Naive thymus-derived CD4-positive, alpha-beta T cell (primary cell): ENCODE measurements at regions of chr5 and their contacts with region 1.

Region 1: GRCh38 chr5:112976432-112977309 is at the start of gene DCP2:
- DNase-seq: peak; percentile 84 to 98 (median 97)
- ATAC-seq: peak; percentile 98
- H3K4me3 ChIP-seq: peak within 1 kb of the TSS; percentile 75
- H3K4me3 Mint-ChIP-seq: peak within 1 kb of the TSS; percentile 88 to 99 (median 98)
- H3K27ac ChIP-seq: peak within 1 kb of the TSS; percentile 83
- H3K27ac Mint-ChIP-seq: peak within 1 kb of the TSS; percentile 89 to 98 (median 95)
- H3K4me1 ChIP-seq: peaks cover 7 to 21% of the 10 kb centered on the region in 2 donors
- H3K4me1 Mint-ChIP-seq: peaks cover 35 to 54% (median 51%) of the 10 kb centered on the region in 7 donors
- H3K27me3 ChIP-seq: no peaks in the 10 kb centered on the region
- H3K27me3 Mint-ChIP-seq: no peaks in the 10 kb centered on the region
- total RNA-seq, gene DCP2: 60.2 to 101 (median 85.1) TPM

Region 2: GRCh38 chr5:111512375-111513130 is 1464.1 kb before region 1 on chr5 and contains the start of gene STARD4:
- CTCF ChIA-PET with region 1: no interaction called
- POLR2A ChIA-PET with region 1: interaction called, 5 read pairs
- intact Hi-C with region 1: loop called in 1 of 2 experiments (anchors 5 kb)
- DNase-seq: peak; percentile 79 to 94 (median 92)
- ATAC-seq: peak; percentile 97
- H3K4me3 ChIP-seq: peak within 1 kb of the TSS; percentile 81
- H3K4me3 Mint-ChIP-seq: peak within 1 kb of the TSS; percentile 91 to 100 (median 98)
- H3K27ac ChIP-seq: peak within 1 kb of the TSS; percentile 73
- H3K27ac Mint-ChIP-seq: peak within 1 kb of the TSS; percentile 90 to 98 (median 94)
- H3K4me1 ChIP-seq: peaks cover 0 to 14% of the 10 kb centered on the region in 2 donors
- H3K4me1 Mint-ChIP-seq: peaks cover 17 to 53% (median 28%) of the 10 kb centered on the region in 7 donors
- H3K27me3 ChIP-seq: no peaks in the 10 kb centered on the region
- H3K27me3 Mint-ChIP-seq: no peaks in the 10 kb centered on the region
- total RNA-seq, gene STARD4: 11.1 to 70.8 (median 17.1) TPM

Region 3: GRCh38 chr5:112637343-112637742 is 339.3 kb before region 1 on chr5:
- CTCF ChIA-PET with region 1: no interaction called
- POLR2A ChIA-PET with region 1: no interaction called
- intact Hi-C with region 1: no loop called
- DNase-seq: no peak
- ATAC-seq: no peak
- H3K4me3 ChIP-seq: no peak overlapping the region
- H3K4me3 Mint-ChIP-seq: no peak overlapping the region
- H3K27ac ChIP-seq: no peak overlapping the region
- H3K27ac Mint-ChIP-seq: no peak overlapping the region
- H3K4me1 ChIP-seq: no peaks in the 10 kb centered on the region
- H3K4me1 Mint-ChIP-seq: no peaks in the 10 kb centered on the region
- H3K27me3 ChIP-seq: no peaks in the 10 kb centered on the region
- H3K27me3 Mint-ChIP-seq: peaks cover 3 to 22% (median 15%) of the 10 kb centered on the region in 5 donors

Region 4: DNA sequence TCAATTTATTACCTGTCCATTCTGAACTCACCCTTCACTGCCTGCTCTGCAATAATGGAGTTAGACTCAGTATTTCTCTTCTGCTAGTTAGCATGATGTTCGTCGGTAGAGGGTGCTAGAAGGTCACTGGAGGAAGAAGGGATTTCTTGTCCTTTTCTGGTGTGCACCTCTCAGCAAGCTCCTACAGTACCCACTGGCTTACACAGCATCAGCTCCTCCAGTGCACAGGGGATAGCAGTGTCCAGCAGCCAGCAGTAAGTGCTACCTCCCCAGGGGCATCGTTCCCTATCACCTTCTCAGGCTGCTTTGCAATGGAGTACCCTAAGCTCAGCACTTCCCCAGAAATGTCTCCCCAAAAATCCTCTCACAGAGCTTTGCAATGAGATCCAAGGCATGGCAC is 284.9 kb before region 1 on chr5:
- CTCF ChIA-PET with region 1: no interaction called
- POLR2A ChIA-PET with region 1: no interaction called
- intact Hi-C with region 1: no loop called
- DNase-seq: peak in 3 of 9 donors; percentile 16 to 50 (median 19)
- ATAC-seq: no peak
- H3K4me3 ChIP-seq: no peak overlapping the region
- H3K4me3 Mint-ChIP-seq: no peak overlapping the region
- H3K27ac ChIP-seq: no peak overlapping the region
- H3K27ac Mint-ChIP-seq: no peak overlapping the region
- H3K4me1 ChIP-seq: no peaks in the 10 kb centered on the region
- H3K4me1 Mint-ChIP-seq: no peaks in the 10 kb centered on the region
- H3K27me3 ChIP-seq: no peaks in the 10 kb centered on the region
- H3K27me3 Mint-ChIP-seq: peaks cover 36 to 68% (median 59%) of the 10 kb centered on the region in 5 donors

Region 5: GRCh38 chr5:112878760-112879159 is 97.9 kb before region 1 on chr5:
- CTCF ChIA-PET with region 1: no interaction called
- POLR2A ChIA-PET with region 1: no interaction called
- intact Hi-C with region 1: loop called (anchors 5 kb)
- DNase-seq: peak in 6 of 9 donors; percentile 5 to 58 (median 14)
- ATAC-seq: peak; percentile 69
- H3K4me3 ChIP-seq: peak overlapping the region; percentile 8
- H3K4me3 Mint-ChIP-seq: peak overlapping the region in 6 of 10 donors; percentile 1 to 67 (median 16)
- H3K27ac ChIP-seq: peak overlapping the region; percentile 15
- H3K27ac Mint-ChIP-seq: peak overlapping the region in 8 of 9 donors; percentile 1 to 90 (median 68)
- H3K4me1 ChIP-seq: peaks cover 5 to 21% of the 10 kb centered on the region in 2 donors
- H3K4me1 Mint-ChIP-seq: peaks cover 22 to 42% (median 30%) of the 10 kb centered on the region in 7 donors
- H3K27me3 ChIP-seq: no peaks in the 10 kb centered on the region
- H3K27me3 Mint-ChIP-seq: no peaks in the 10 kb centered on the region

Region 6: GRCh38 chr5:113022661-113023060 is 46.0 kb after region 1 on chr5:
- CTCF ChIA-PET with region 1: no interaction called
- POLR2A ChIA-PET with region 1: interaction called, 16 read pairs
- intact Hi-C with region 1: loop called (anchors 1 kb)
- DNase-seq: peak in 7 of 9 donors; percentile 56 to 86 (median 77)
- ATAC-seq: peak; percentile 95
- H3K4me3 ChIP-seq: peak overlapping the region; percentile 1
- H3K4me3 Mint-ChIP-seq: peak overlapping the region; percentile 5 to 78 (median 70)
- H3K27ac ChIP-seq: peak overlapping the region; percentile 12
- H3K27ac Mint-ChIP-seq: peak overlapping the region; percentile 74 to 94 (median 87)
- H3K4me1 ChIP-seq: peaks cover 36 to 47% of the 10 kb centered on the region in 2 donors
- H3K4me1 Mint-ChIP-seq: peaks cover 24 to 79% (median 68%) of the 10 kb centered on the region in 7 donors
- H3K27me3 ChIP-seq: no peaks in the 10 kb centered on the region
- H3K27me3 Mint-ChIP-seq: no peaks in the 10 kb centered on the region

Region 7: DNA sequence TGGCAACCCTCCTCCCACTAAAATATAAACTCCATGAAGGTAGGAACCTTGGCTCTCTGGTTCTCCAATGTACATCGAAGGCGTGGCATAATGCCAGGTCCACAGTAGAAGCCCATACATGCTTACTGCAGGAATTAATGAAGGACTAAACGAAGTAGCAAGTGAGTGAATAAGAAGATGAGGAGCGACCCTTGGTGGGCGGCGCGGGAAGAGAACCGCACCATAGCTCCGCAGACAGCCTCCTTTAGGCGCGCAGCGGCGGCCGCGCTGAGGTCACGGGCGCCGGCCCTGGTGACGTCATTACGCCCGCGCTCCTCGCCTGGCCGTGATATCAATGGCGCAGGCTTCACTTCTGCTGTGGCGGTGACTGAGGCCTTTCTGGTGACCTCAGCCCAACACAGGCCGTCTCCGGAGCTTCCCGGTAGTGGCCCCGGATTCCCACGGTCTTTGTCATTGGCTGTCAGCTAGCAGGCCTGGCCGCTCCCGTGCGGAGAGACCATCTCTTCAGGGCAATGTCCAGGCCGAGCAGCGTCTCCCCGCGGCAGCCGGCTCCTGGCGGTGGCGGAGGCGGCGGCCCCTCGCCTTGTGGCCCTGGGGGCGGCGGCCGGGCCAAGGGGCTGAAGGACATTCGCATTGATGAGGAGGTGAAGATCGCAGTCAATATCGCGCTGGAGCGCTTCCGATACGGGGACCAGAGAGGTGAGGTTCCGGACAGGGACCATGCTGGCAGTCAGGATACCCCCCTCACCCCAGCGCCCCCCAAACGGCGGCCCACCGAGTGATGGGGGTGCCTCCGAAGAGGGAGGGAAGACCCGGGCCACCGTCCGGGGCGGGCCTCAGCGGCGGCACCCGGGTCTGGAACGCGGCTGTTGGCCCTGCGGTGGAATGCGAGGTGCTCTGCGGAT is 537.0 kb after region 1 on chr5 and contains the start of gene YTHDC2:
- CTCF ChIA-PET with region 1: no interaction called
- POLR2A ChIA-PET with region 1: interaction called, 9 read pairs
- intact Hi-C with region 1: loop called (anchors 1 to 5 kb)
- DNase-seq: peak; percentile 79 to 89 (median 87)
- ATAC-seq: peak; percentile 97
- H3K4me3 ChIP-seq: peak within 1 kb of the TSS; percentile 85
- H3K4me3 Mint-ChIP-seq: peak within 1 kb of the TSS; percentile 86 to 98 (median 94)
- H3K27ac ChIP-seq: peak within 1 kb of the TSS; percentile 94
- H3K27ac Mint-ChIP-seq: peak within 1 kb of the TSS; percentile 86 to 98 (median 97)
- H3K4me1 ChIP-seq: peaks cover 6 to 9% of the 10 kb centered on the region in 2 donors
- H3K4me1 Mint-ChIP-seq: peaks cover 27 to 51% (median 44%) of the 10 kb centered on the region in 7 donors
- H3K27me3 ChIP-seq: no peaks in the 10 kb centered on the region
- H3K27me3 Mint-ChIP-seq: peaks cover 12 to 19% (median 13%) of the 10 kb centered on the region in 5 donors
- total RNA-seq, gene YTHDC2: 27.7 to 53.6 (median 49.2) TPM